Caco-2 (cell line): ENCODE measurements at regions of chr10 and their contacts with region 1.

Region 1: GRCh38 chr10:28375399-28376369 is 72.8 kb upstream of the MPP7 start:
- DNase-seq: peak; percentile 91 to 94
- H3K4me3 ChIP-seq: no peak overlapping the region
- H3K4me3 Mint-ChIP-seq: peak overlapping the region; percentile 58
- H3K27ac Mint-ChIP-seq: peak overlapping the region; percentile 80
- H3K4me1 ChIP-seq: peaks cover 42% of the 10 kb centered on the region
- H3K4me1 Mint-ChIP-seq: peaks cover 69% of the 10 kb centered on the region
- H3K27me3 ChIP-seq: no peaks in the 10 kb centered on the region
- H3K27me3 Mint-ChIP-seq: no peaks in the 10 kb centered on the region
- CTCF ChIP-seq: no peak

Region 2: GRCh38 chr10:28284123-28284522 is 91.6 kb before region 1 on chr10:
- CTCF ChIA-PET with region 1: interaction called, 10 read pairs
- POLR2A ChIA-PET with region 1: no interaction called
- intact Hi-C with region 1: loop called (anchors 1 kb)
- DNase-seq: peak; percentile 79 to 82
- H3K4me3 ChIP-seq: no peak overlapping the region
- H3K4me3 Mint-ChIP-seq: peak overlapping the region; percentile 23
- H3K27ac Mint-ChIP-seq: peak overlapping the region; percentile 48
- H3K4me1 ChIP-seq: peaks cover 23% of the 10 kb centered on the region
- H3K4me1 Mint-ChIP-seq: peaks cover 52% of the 10 kb centered on the region
- H3K27me3 ChIP-seq: no peaks in the 10 kb centered on the region
- H3K27me3 Mint-ChIP-seq: no peaks in the 10 kb centered on the region
- CTCF ChIP-seq: no peak

Region 3: DNA sequence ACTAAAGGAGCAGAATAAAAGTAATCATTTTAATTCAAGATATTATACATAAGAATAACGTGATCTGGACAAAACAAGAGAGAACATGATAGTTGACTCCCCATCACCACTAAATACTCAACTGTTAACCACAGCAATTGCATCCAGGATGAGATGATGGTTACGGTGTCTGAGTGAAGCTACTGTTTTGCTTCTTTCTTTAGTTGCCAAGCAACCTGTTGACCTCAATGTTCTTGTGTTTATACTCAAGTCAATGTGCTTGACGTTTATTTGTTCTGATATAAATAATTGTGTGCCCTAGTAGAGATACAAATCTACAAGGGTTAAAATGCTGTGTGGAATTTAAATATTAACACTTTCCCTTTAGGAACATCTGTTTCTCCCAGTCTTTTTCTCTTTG is 41.4 kb before region 1 on chr10:
- CTCF ChIA-PET with region 1: interaction called, 7 read pairs
- POLR2A ChIA-PET with region 1: no interaction called
- intact Hi-C with region 1: loop called (anchors 1 kb)
- DNase-seq: peak in 1 of 2 experiments; percentile 53
- H3K4me3 ChIP-seq: no peak overlapping the region
- H3K4me3 Mint-ChIP-seq: peak overlapping the region; percentile 70
- H3K27ac Mint-ChIP-seq: peak overlapping the region; percentile 83
- H3K4me1 ChIP-seq: peaks cover 26% of the 10 kb centered on the region
- H3K4me1 Mint-ChIP-seq: peaks cover 29% of the 10 kb centered on the region
- H3K27me3 ChIP-seq: no peaks in the 10 kb centered on the region
- H3K27me3 Mint-ChIP-seq: no peaks in the 10 kb centered on the region
- CTCF ChIP-seq: no peak

Region 4: GRCh38 chr10:28355376-28355775 is 20.3 kb before region 1 on chr10:
- CTCF ChIA-PET with region 1: interaction called, 3 read pairs
- POLR2A ChIA-PET with region 1: no interaction called
- intact Hi-C with region 1: loop called (anchors 1 kb)
- DNase-seq: no peak
- H3K4me3 ChIP-seq: no peak overlapping the region
- H3K4me3 Mint-ChIP-seq: no peak overlapping the region
- H3K27ac Mint-ChIP-seq: no peak overlapping the region
- H3K4me1 ChIP-seq: peaks cover 21% of the 10 kb centered on the region
- H3K4me1 Mint-ChIP-seq: peaks cover 49% of the 10 kb centered on the region
- H3K27me3 ChIP-seq: no peaks in the 10 kb centered on the region
- H3K27me3 Mint-ChIP-seq: no peaks in the 10 kb centered on the region
- CTCF ChIP-seq: no peak